CD4-positive, alpha-beta memory T cell (primary cell): ENCODE measurements at regions of chr3 and their contacts with region 1.

Region 1: GRCh38 chr3:40580494-40581091 is 55.8 kb downstream of the ZNF621 start:
- DNase-seq: peak; percentile 43 to 61 (median 46)
- H3K4me3 ChIP-seq: no peak overlapping the region
- H3K4me3 Mint-ChIP-seq: no peak overlapping the region
- H3K27ac ChIP-seq: no peak overlapping the region
- H3K27ac Mint-ChIP-seq: no peak overlapping the region
- H3K4me1 ChIP-seq: no peaks in the 10 kb centered on the region
- H3K4me1 Mint-ChIP-seq: peaks cover 0 to 1% (median 0%) of the 10 kb centered on the region in 4 donors
- H3K27me3 ChIP-seq: no peaks in the 10 kb centered on the region
- H3K27me3 Mint-ChIP-seq: peaks cover 5 to 10% of the 10 kb centered on the region in 2 donors

Region 2: DNA sequence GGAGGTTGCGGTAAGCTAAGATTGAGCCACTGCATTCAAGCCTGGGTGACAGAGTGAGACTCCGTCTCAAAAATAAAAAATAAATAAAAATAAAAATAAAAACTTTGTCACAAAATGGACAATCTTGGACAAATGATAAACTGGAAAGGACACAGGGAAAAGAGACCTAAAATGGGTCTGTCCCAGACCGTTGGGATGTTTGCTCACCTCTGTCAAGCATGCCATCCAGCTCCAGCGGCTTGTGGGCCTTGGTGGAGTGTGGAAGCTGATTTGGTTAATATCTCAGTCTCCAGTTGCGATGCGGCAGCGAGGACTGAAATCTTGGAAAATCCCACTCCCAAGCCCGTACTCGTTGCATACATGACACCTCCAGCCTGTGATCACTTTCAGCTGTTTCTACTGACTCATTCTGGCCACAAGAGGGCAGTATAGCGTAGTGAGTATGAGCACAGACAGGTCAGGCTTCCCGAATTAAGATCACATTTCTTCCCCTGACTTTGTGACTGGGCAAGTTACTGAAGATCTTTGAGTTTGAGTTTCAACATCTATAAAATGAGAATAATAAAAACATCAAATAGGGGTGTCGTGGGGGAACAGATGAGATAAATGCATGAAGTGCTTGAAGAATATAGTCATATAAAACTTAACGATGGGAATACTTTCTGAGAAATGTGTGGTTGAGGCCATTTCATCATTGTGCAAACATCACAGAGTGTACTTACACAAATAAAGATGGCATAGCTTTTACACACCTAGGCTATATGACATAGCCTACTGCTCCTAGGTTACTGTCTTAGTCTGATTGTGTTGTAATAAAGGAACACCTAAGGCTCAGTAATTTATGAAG is 1132.7 kb before region 1 on chr3:
- CTCF ChIA-PET with region 1: no interaction called
- POLR2A ChIA-PET with region 1: no interaction called
- intact Hi-C with region 1: no loop called
- DNase-seq: peak; percentile 51 to 59 (median 55)
- H3K4me3 ChIP-seq: no peak overlapping the region
- H3K4me3 Mint-ChIP-seq: no peak overlapping the region
- H3K27ac ChIP-seq: no peak overlapping the region
- H3K27ac Mint-ChIP-seq: peak overlapping the region in 1 of 7 donors; percentile 37
- H3K4me1 ChIP-seq: no peaks in the 10 kb centered on the region
- H3K4me1 Mint-ChIP-seq: peaks cover 0 to 4% (median under 1%) of the 10 kb centered on the region in 4 donors
- H3K27me3 ChIP-seq: no peaks in the 10 kb centered on the region
- H3K27me3 Mint-ChIP-seq: peaks cover 2 to 3% of the 10 kb centered on the region in 2 donors

Region 3: GRCh38 chr3:40317061-40317855 is 263.3 kb before region 1 on chr3:
- CTCF ChIA-PET with region 1: interaction called, 76 read pairs
- POLR2A ChIA-PET with region 1: no interaction called
- intact Hi-C with region 1: no loop called
- DNase-seq: peak; percentile 56 to 63 (median 58)
- H3K4me3 ChIP-seq: no peak overlapping the region
- H3K4me3 Mint-ChIP-seq: no peak overlapping the region
- H3K27ac ChIP-seq: no peak overlapping the region
- H3K27ac Mint-ChIP-seq: peak overlapping the region in 1 of 7 donors; percentile 50
- H3K4me1 ChIP-seq: peaks cover 5% of the 10 kb centered on the region
- H3K4me1 Mint-ChIP-seq: peaks cover 6 to 19% (median 8%) of the 10 kb centered on the region in 4 donors
- H3K27me3 ChIP-seq: no peaks in the 10 kb centered on the region
- H3K27me3 Mint-ChIP-seq: no peaks in the 10 kb centered on the region

Region 4: GRCh38 chr3:40597441-40597840 is 16.8 kb after region 1 on chr3:
- CTCF ChIA-PET with region 1: interaction called, 14 read pairs
- POLR2A ChIA-PET with region 1: no interaction called
- intact Hi-C with region 1: no loop called
- DNase-seq: no peak
- H3K4me3 ChIP-seq: no peak overlapping the region
- H3K4me3 Mint-ChIP-seq: no peak overlapping the region
- H3K27ac ChIP-seq: no peak overlapping the region
- H3K27ac Mint-ChIP-seq: no peak overlapping the region
- H3K4me1 ChIP-seq: no peaks in the 10 kb centered on the region
- H3K4me1 Mint-ChIP-seq: no peaks in the 10 kb centered on the region
- H3K27me3 ChIP-seq: no peaks in the 10 kb centered on the region
- H3K27me3 Mint-ChIP-seq: peaks cover 12% of the 10 kb centered on the region in 2 donors

Region 5: DNA sequence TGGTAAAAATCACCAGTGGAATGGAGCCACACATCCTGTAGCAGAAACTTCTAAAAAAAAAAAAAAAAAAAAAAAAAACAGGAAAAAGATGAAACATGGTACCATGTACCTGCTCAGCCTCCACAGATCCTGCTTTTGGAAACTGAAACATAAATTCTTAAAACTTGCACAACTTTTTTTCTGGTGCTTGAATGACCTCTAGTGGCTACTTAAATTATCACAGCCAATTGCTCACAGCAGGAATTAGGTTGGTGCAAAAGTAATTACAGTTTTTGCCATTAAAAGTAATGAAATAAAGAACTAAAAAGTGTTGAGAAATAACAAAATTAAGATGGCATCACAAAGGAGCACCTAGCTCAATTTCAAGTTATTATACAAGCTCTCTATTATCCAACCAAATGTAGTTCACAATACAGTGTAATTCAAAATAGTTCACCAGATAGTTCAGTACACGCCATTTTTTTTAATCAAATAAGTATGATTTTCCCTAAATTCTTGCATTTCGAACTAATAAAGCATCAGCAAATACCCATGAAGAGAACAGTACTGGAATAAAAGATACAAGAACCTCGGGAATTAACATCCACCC is 1300.7 kb after region 1 on chr3:
- CTCF ChIA-PET with region 1: interaction called, 141 read pairs
- POLR2A ChIA-PET with region 1: no interaction called
- intact Hi-C with region 1: loop called (anchors 1 kb)
- DNase-seq: peak in 4 of 5 donors; percentile 36 to 53 (median 42)
- H3K4me3 ChIP-seq: no peak overlapping the region
- H3K4me3 Mint-ChIP-seq: no peak overlapping the region
- H3K27ac ChIP-seq: no peak overlapping the region
- H3K27ac Mint-ChIP-seq: no peak overlapping the region
- H3K4me1 ChIP-seq: no peaks in the 10 kb centered on the region
- H3K4me1 Mint-ChIP-seq: no peaks in the 10 kb centered on the region
- H3K27me3 ChIP-seq: no peaks in the 10 kb centered on the region
- H3K27me3 Mint-ChIP-seq: no peaks in the 10 kb centered on the region

Region 6: GRCh38 chr3:42443819-42444436 is 1863.3 kb after region 1 on chr3:
- CTCF ChIA-PET with region 1: no interaction called
- POLR2A ChIA-PET with region 1: no interaction called
- intact Hi-C with region 1: loop called (anchors 1 kb)
- DNase-seq: peak; percentile 47 to 63 (median 59)
- H3K4me3 ChIP-seq: no peak overlapping the region
- H3K4me3 Mint-ChIP-seq: no peak overlapping the region
- H3K27ac ChIP-seq: no peak overlapping the region
- H3K27ac Mint-ChIP-seq: no peak overlapping the region
- H3K4me1 ChIP-seq: no peaks in the 10 kb centered on the region
- H3K4me1 Mint-ChIP-seq: no peaks in the 10 kb centered on the region
- H3K27me3 ChIP-seq: no peaks in the 10 kb centered on the region
- H3K27me3 Mint-ChIP-seq: peaks cover 4 to 18% of the 10 kb centered on the region in 2 donors